ENCODE measurements at regions of chr10 and their contacts with region 1.

Region 1: GRCh38 chr10:35124540-35124939 is 2.1 kb upstream of the CREM start:
- DNase-seq: no peak
- H3K4me3 ChIP-seq: no peak overlapping the region
- H3K27ac ChIP-seq: no peak overlapping the region
- H3K4me1 ChIP-seq: no peaks in the 10 kb centered on the region
- H3K27me3 ChIP-seq: no peaks in the 10 kb centered on the region
- CTCF ChIP-seq: no peak
- POLR2A ChIP-seq: no peak

Region 2: DNA sequence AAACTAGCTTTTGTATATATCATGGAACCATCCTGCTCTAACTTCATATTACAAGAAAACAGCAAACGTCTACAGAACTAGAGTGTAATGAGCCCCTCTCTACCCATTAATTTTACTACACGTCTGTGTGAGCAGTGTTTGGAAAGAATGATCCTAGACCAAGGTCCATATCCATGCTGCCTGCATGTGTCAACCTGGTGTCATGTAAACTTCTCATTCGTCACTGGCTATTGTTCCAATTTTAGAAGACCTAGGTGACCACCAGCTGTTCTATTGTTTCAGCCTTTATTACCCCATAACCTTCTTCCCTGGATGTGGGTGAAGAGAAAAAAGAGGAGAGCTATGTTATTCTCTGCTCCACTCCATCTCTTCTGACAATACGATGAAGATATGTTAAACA is 79.2 kb after region 1 on chr10:
- intact Hi-C with region 1: loop called (anchors 5 kb)
- DNase-seq: no peak
- H3K4me3 ChIP-seq: no peak overlapping the region
- H3K27ac ChIP-seq: no peak overlapping the region
- H3K4me1 ChIP-seq: no peaks in the 10 kb centered on the region
- H3K27me3 ChIP-seq: no peaks in the 10 kb centered on the region
- CTCF ChIP-seq: no peak
- POLR2A ChIP-seq: no peak

Region 3: DNA sequence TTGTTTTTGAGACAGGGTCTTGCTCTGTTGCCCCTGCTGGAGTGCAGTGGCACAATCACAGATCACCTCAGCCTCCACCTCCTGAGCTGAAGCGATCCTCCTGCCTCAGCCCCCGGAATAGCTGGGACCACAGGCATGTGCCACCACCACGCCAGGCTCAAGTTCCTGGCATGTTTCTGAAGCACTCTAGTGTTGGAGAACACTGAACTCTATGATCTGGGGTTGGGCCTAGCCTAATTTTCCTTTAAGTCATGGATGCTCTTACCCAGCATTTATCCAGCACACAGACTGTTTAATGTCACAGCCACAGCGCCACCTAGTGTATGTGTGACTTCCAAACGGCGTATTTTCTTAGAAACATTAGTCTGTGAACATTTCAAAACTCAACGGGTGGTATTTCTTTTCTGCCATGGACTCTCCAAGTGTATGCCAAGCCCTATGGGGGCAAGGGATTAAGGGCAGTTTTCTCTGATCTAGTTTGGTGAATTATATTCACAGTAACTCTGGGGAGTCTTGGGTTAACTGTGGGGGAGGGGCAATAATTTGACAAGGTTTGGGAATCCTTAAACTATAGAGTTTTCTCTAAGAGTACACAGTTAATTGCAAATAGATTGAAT is 93.9 kb after region 1 on chr10:
- intact Hi-C with region 1: loop called (anchors 5 kb)
- DNase-seq: peak; percentile 77 to 85
- H3K4me3 ChIP-seq: no peak overlapping the region
- H3K27ac ChIP-seq: no peak overlapping the region
- H3K4me1 ChIP-seq: no peaks in the 10 kb centered on the region
- H3K27me3 ChIP-seq: no peaks in the 10 kb centered on the region
- CTCF ChIP-seq: peak; percentile 76 to 86 (median 82)
- POLR2A ChIP-seq: no peak

Region 4: DNA sequence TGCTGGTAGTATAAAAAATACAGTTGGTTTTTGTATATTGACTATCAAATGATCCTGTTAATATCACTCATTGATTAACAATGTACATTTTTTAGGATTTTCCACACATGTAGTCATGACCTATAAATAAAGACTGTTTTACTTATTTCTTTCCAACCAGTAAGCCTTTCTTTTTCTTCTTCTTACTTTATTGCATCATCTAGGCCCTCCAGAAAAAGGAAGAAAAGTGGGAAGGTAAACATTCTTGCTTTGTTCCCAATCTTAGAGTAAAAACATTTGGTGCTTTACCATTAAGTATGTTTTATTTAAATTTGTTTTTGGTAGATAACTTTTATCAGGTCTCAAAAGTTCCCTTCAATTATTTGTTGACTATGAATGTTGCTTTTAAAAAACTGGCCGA is 164.7 kb after region 1 on chr10:
- intact Hi-C with region 1: no loop called
- DNase-seq: no peak
- H3K4me3 ChIP-seq: no peak overlapping the region
- H3K27ac ChIP-seq: no peak overlapping the region
- H3K4me1 ChIP-seq: no peaks in the 10 kb centered on the region
- H3K27me3 ChIP-seq: no peaks in the 10 kb centered on the region
- CTCF ChIP-seq: no peak
- POLR2A ChIP-seq: no peak

Measured in uterus (tissue), 4 donors.